ENCODE measurements at regions of chr2 and their contacts with region 1.

Region 1: GRCh38 chr2:234488913-234489451 is 7.9 kb downstream of the ARL4C start:
- DNase-seq: peak; percentile 94
- H3K4me3 Mint-ChIP-seq: peak overlapping the region; percentile 90
- H3K27ac Mint-ChIP-seq: peak overlapping the region; percentile 97
- H3K4me1 Mint-ChIP-seq: peaks cover 84% of the 10 kb centered on the region
- H3K27me3 Mint-ChIP-seq: no peaks in the 10 kb centered on the region

Region 2: GRCh38 chr2:233375490-233376314 is 1113.3 kb before region 1 on chr2:
- intact Hi-C with region 1: no loop called
- DNase-seq: no peak
- H3K4me3 Mint-ChIP-seq: no peak overlapping the region
- H3K27ac Mint-ChIP-seq: no peak overlapping the region
- H3K4me1 Mint-ChIP-seq: peaks cover 10% of the 10 kb centered on the region
- H3K27me3 Mint-ChIP-seq: no peaks in the 10 kb centered on the region

Region 3: GRCh38 chr2:234446404-234447076 is 42.4 kb before region 1 on chr2:
- intact Hi-C with region 1: loop called (anchors 1 kb)
- DNase-seq: peak; percentile 96
- H3K4me3 Mint-ChIP-seq: peak overlapping the region; percentile 85
- H3K27ac Mint-ChIP-seq: peak overlapping the region; percentile 100
- H3K4me1 Mint-ChIP-seq: peaks cover 80% of the 10 kb centered on the region
- H3K27me3 Mint-ChIP-seq: no peaks in the 10 kb centered on the region

Region 4: GRCh38 chr2:234451852-234452625 is 36.9 kb before region 1 on chr2:
- intact Hi-C with region 1: loop called (anchors 1 kb)
- DNase-seq: no peak
- H3K4me3 Mint-ChIP-seq: peak overlapping the region; percentile 86
- H3K27ac Mint-ChIP-seq: peak overlapping the region; percentile 91
- H3K4me1 Mint-ChIP-seq: peaks cover 78% of the 10 kb centered on the region
- H3K27me3 Mint-ChIP-seq: no peaks in the 10 kb centered on the region

Region 5: DNA sequence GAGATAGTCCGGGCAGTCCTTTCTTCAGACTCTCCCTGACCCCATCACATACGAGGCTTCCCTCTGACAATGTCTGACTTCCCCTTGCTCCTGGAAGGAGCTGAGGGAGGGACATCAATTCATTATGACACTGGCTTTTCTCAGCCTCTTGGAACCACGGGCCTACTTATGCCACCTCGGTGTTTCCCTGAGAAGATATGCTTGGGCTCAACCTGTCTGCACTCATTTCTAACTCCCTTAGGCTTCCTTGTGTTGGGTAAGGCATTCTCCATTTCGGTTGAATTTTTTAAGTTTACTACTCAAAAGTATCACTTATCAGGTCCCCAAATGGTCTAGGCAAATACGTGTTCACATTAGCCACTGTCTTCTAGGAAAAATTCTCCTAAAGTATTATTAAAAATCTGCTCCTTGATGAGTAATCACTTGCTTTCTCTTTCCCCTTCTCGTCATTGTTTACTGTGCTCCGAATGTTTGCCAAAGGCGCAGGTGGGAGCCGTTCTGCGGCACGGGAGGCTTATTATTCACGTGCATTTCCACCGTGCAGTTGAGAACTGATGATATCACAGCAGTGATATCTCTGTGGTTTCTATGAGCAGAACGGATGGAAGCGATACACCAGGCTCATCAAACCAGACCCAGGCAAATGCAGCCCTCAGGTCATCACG is 25.2 kb before region 1 on chr2:
- intact Hi-C with region 1: loop called (anchors 1 kb)
- DNase-seq: peak; percentile 92
- H3K4me3 Mint-ChIP-seq: peak overlapping the region; percentile 79
- H3K27ac Mint-ChIP-seq: peak overlapping the region; percentile 85
- H3K4me1 Mint-ChIP-seq: peaks cover 55% of the 10 kb centered on the region
- H3K27me3 Mint-ChIP-seq: no peaks in the 10 kb centered on the region

Region 6: DNA sequence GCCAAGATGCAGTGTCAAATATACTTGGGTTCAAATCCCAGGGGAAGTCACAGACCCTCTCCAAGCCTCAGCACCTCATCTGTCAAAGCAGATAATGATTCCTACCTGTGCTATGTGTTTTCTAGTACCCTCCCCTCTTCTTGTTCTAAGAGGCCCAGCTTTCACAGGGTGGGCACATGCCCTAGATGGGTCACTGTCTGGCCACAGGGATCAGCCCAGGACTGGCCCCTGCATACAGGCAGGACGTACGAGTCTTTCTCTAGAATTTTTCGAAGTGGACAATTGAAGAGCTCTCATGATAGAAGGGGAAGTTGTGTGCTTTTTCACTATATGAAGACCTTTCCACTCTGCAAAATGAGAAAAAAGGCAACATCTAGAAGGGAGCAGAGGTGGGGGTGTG is 14.3 kb before region 1 on chr2:
- intact Hi-C with region 1: loop called (anchors 1 kb)
- DNase-seq: no peak
- H3K4me3 Mint-ChIP-seq: no peak overlapping the region
- H3K27ac Mint-ChIP-seq: peak overlapping the region; percentile 86
- H3K4me1 Mint-ChIP-seq: peaks cover 43% of the 10 kb centered on the region
- H3K27me3 Mint-ChIP-seq: no peaks in the 10 kb centered on the region

Region 7: GRCh38 chr2:234512884-234513669 is 24.1 kb after region 1 on chr2:
- intact Hi-C with region 1: no loop called
- DNase-seq: no peak
- H3K4me3 Mint-ChIP-seq: no peak overlapping the region
- H3K27ac Mint-ChIP-seq: no peak overlapping the region
- H3K4me1 Mint-ChIP-seq: no peaks in the 10 kb centered on the region
- H3K27me3 Mint-ChIP-seq: peaks cover 23% of the 10 kb centered on the region